ENCODE measurements at regions of chr19 and their contacts with region 1.

Region 1: GRCh38 chr19:12278713-12279112 is 16.0 kb downstream of the ZNF44 start:
- DNase-seq: no peak
- H3K4me3 ChIP-seq: no peak overlapping the region
- H3K27ac ChIP-seq: no peak overlapping the region
- H3K4me1 ChIP-seq: no peaks in the 10 kb centered on the region
- CTCF ChIP-seq: no peak

Region 2: DNA sequence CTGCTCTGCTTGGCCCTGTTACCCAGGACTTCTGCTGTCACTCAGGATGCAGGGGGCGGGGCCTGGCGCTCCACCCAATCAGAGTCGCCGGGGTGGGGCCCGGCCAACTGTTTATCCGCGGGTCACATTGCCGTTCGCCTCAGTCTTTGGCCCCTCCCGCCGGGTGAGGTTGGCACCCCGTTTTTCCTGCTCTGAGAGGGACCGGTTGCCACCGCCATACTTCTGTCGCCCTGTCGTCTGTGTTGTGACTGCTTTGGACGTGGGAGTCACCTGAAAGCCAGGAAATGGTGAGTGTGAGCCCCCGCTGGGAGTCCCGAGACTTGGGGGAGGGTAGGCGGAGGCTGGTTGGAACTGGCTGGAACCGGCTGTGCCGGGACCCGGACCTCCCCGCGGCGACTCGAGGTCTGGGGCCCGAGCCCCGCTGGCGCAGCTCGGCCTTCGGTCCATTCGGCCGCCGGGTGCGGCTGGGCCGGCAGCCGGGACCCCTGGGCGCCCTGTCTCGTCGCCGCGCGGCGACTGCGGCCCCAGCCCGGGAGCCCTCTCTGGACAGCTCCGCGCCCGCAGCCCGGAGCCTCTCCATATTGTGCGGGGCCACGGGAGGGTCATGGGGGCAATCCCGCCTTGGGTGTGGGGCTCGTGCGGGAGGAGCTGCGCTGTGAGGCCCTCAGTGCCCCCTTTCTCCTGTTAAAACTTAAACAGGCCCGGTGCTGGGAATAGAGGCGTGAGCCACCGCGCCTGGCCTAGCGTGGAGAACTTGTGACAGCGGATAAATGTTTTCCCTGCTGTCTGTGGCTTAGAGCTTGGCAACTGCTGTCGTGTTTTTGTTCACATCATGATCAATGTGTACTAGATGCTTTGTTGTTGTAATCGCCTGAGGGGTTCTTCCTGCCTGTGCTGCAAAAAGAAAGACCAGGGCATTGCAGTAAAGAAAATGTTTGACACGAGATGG is 213.8 kb before region 1 on chr19 and contains the start of gene ZNF844:
- CTCF ChIA-PET with region 1: no interaction called
- POLR2A ChIA-PET with region 1: interaction called, 10 read pairs
- intact Hi-C with region 1: no loop called
- DNase-seq: peak; percentile 89
- H3K4me3 ChIP-seq: peak within 1 kb of the TSS; percentile 87
- H3K27ac ChIP-seq: peak within 1 kb of the TSS; percentile 53
- H3K4me1 ChIP-seq: peaks cover 11% of the 10 kb centered on the region
- CTCF ChIP-seq: no peak
- total RNA-seq, gene ZNF844: 5.8 and 6.7 TPM in 2 replicates